Heart right ventricle (tissue), 16 donors: ENCODE measurements at regions of chr15 and their contacts with region 1.

Region 1: GRCh38 chr15:49415638-49416037 is 7.4 kb upstream of the FGF7 start:
- DNase-seq: no peak
- ATAC-seq: no peak
- H3K4me3 ChIP-seq: no peak overlapping the region
- H3K27ac ChIP-seq: no peak overlapping the region
- H3K4me1 ChIP-seq: no peaks in the 10 kb centered on the region
- H3K27me3 ChIP-seq: no peaks in the 10 kb centered on the region
- CTCF ChIP-seq: no peak

Region 2: DNA sequence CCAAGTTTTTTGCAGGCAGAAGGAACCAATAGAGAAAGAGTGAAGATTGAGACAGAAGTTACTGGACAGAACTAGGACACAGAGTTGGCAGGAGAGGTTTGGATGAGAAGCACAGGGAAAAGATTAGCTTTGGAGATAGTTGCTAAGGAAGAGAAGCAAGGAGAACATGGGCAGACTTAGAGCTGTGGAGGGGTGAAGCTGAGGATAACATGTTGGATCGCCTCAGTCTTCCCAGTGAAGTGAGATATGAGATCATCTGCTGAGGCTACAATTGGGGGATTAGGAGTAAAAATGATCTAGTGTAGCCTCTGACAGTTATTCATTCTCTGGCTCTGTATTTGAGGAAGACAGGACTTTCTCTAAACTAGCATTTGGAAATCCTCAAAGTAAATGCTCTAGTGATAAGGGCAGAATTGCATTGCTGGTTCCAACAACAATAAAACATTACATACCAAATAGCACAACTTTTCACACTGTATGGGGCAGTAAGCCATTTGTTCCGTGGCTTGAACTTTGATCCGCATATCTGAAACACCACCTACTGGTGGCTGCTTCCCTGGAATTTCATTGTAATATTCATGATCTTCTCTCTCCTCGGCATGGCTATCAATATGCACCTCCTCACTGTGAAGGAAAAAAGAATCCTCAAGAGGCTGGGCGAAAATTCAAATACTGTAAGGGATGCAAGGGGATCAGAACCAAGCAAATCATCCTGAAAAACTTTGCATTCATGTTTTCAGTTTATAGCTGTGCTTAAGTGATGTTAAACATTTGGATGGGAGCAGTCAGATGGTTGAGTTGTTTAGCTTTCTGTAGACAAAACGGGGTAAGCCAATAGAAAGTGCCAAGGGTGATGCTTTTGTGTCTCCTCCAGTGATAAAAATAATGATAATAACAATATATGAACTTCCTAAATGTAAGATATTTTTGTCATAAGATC is 559.9 kb before region 1 on chr15:
- intact Hi-C with region 1: loop called in 8 of 10 experiments (anchors 2 to 10 kb)
- DNase-seq: peak in 1 of 2 donors; percentile 16
- ATAC-seq: peak in 7 of 8 donors; percentile 68 to 89 (median 80)
- H3K4me3 ChIP-seq: no peak overlapping the region
- H3K27ac ChIP-seq: peak overlapping the region in 1 of 10 donors; percentile 10
- H3K4me1 ChIP-seq: peaks cover 0 to 13% (median 0%) of the 10 kb centered on the region in 9 donors
- H3K27me3 ChIP-seq: no peaks in the 10 kb centered on the region
- CTCF ChIP-seq: peak in 7 of 9 donors; percentile 37 to 60 (median 49)

Region 3: GRCh38 chr15:49235446-49236124 is 180.1 kb before region 1 on chr15:
- intact Hi-C with region 1: loop called in 6 of 10 experiments (anchors 2 to 10 kb)
- DNase-seq: peak in 1 of 2 donors; percentile 46
- ATAC-seq: peak; percentile 64 to 85 (median 80)
- H3K4me3 ChIP-seq: no peak overlapping the region
- H3K27ac ChIP-seq: peak overlapping the region in 3 of 10 donors; percentile 3 to 52 (median 23)
- H3K4me1 ChIP-seq: peaks cover 0 to 52% (median 21%) of the 10 kb centered on the region in 9 donors
- H3K27me3 ChIP-seq: no peaks in the 10 kb centered on the region
- CTCF ChIP-seq: peak; percentile 46 to 82 (median 78)

Region 4: DNA sequence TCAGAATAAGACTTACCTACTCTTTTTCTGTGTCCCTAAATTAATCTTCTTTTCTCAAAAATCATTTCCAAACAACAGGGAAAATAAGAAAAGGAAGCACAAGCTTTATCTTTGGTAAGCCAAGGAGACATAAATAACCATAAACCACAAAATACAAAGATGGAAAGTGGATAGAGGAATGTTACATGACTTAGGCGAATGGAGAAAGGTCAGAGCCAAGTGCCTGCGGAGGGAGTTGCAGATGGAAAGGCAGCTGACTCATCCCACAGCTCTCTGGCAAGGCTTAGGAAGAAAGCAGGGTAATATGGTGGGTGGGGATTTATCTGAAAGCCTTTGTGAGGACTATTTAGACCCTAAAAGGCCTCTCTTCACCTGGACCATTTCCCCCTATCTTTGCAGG is 172.8 kb before region 1 on chr15:
- intact Hi-C with region 1: loop called in 4 of 10 experiments (anchors 5 to 10 kb)
- DNase-seq: no peak
- ATAC-seq: peak in 3 of 8 donors; percentile 72 to 78 (median 74)
- H3K4me3 ChIP-seq: no peak overlapping the region
- H3K27ac ChIP-seq: peak overlapping the region in 1 of 10 donors; percentile 32
- H3K4me1 ChIP-seq: peaks cover 0 to 28% (median 9%) of the 10 kb centered on the region in 9 donors
- H3K27me3 ChIP-seq: no peaks in the 10 kb centered on the region
- CTCF ChIP-seq: no peak

Region 5: DNA sequence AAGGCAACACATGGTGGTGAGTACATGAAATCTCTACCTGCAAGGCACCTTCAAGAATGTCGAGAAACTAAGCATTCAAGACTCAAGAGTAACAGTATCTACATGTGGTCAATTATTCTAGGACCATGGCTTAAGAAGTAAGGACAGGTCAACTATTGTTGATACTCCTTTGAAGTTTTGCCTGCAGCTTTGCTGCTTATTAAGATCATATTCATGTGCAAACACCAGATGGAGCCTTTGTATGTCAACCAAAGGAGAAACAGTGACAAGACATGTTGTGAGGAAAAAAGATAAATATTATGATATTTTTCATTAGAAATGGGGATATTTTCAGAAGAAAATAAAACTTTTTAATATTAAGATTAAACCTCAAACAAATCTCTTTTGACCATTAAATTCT is 44.9 kb before region 1 on chr15:
- intact Hi-C with region 1: no loop called
- DNase-seq: no peak
- ATAC-seq: no peak
- H3K4me3 ChIP-seq: no peak overlapping the region
- H3K27ac ChIP-seq: no peak overlapping the region
- H3K4me1 ChIP-seq: no peaks in the 10 kb centered on the region
- H3K27me3 ChIP-seq: no peaks in the 10 kb centered on the region
- CTCF ChIP-seq: peak in 7 of 9 donors; percentile 24 to 48 (median 39)

Region 6: DNA sequence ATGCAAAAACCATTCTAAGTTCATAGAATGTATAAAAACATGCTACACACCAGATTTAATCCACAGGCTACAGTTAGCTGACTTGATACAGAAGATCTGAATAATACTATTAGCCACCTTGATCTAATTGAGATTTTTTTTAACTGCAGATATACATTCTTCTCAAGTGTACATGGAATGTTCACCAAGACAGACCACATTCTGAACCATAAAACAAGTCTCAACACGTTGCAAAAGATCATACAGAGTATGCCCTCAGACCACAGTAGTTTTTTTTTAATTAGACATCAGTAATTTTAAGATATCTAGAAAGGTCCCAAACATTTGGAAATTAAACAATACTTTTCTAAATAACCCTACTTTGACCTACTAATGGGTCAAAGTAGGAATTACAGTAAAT is 90.7 kb after region 1 on chr15:
- intact Hi-C with region 1: no loop called
- DNase-seq: no peak
- ATAC-seq: no peak
- H3K4me3 ChIP-seq: no peak overlapping the region
- H3K27ac ChIP-seq: no peak overlapping the region
- H3K4me1 ChIP-seq: no peaks in the 10 kb centered on the region
- H3K27me3 ChIP-seq: no peaks in the 10 kb centered on the region
- CTCF ChIP-seq: no peak

Region 7: DNA sequence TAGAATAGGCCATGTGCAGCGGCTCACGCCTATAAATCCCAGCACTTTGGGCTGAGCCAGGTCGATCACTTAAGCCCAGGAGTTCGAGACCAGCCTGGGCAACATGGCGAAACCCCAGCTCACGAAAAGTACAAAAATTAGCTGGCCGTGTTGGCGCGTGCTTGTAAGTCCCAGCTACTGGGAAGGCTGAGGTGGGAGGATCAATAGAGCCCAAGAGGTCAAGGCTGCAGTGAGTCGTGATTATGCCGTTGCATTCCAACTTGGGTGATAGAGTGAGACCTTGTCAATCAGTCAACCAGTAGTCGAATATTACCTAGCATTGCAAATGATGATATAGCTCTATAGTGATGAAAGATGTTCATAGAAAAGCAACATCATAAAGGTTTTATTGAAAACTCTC is 1060.5 kb after region 1 on chr15:
- intact Hi-C with region 1: no loop called
- DNase-seq: no peak
- ATAC-seq: no peak
- H3K4me3 ChIP-seq: no peak overlapping the region
- H3K27ac ChIP-seq: no peak overlapping the region
- H3K4me1 ChIP-seq: no peaks in the 10 kb centered on the region
- H3K27me3 ChIP-seq: no peaks in the 10 kb centered on the region
- CTCF ChIP-seq: no peak